Esophagus muscularis mucosa (tissue), 4 donors: ENCODE measurements at regions of chr3 and their contacts with region 1.

Region 1: DNA sequence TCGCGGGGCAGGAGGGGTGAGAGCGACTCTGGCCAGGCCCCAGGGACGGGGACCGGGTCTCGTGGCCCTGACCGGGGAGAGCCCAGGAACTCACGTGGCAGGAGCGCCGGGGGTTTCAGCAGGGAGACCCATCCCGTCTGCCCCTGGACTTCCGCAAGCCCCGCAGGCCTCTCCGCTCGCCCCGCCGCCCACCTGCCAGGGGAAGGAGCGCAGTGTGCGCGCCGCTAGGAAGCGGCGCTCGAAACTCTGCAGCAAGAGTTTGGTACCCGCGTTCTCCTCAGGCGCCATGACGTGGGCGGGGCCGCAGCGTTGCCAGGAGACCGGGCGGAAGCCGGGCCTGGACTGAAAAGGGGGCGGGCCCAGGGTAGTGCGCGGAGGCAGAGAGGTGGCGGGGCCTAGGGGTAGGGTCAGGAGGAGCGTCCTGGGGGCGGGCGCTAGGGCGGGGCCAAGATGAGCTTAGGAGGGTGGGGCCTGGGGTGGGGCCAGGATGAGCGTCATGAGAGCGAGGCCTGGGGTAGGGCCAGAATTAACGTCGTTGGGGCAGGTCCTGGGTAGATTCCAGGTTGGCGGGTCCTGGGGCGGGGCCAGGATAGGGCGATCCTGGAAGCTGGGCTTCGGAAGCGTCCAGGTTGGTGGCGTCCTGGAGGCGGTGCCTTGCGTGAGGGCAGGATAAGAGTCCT is 29.7 kb downstream of the ALG1L2 start:
- DNase-seq: peak; percentile 100
- H3K4me3 ChIP-seq: peak overlapping the region; percentile 65 to 92 (median 83)
- H3K27ac ChIP-seq: peak overlapping the region; percentile 85 to 93 (median 92)
- H3K4me1 ChIP-seq: peaks cover 9 to 21% (median 19%) of the 10 kb centered on the region in 4 donors
- H3K27me3 ChIP-seq: no peaks in the 10 kb centered on the region
- CTCF ChIP-seq: no peak
- EP300 ChIP-seq: no peak
- POLR2A ChIP-seq: no peak

Region 2: GRCh38 chr3:129942296-129942695 is 169.0 kb before region 1 on chr3:
- intact Hi-C with region 1: loop called (anchors 5 kb)
- DNase-seq: no peak
- H3K4me3 ChIP-seq: no peak overlapping the region
- H3K27ac ChIP-seq: no peak overlapping the region
- H3K4me1 ChIP-seq: no peaks in the 10 kb centered on the region
- H3K27me3 ChIP-seq: peaks cover 0 to 3% (median 0%) of the 10 kb centered on the region in 4 donors
- CTCF ChIP-seq: peak; percentile 50 to 67 (median 63)
- EP300 ChIP-seq: no peak
- POLR2A ChIP-seq: no peak